T-cell (primary cell): ENCODE measurements at regions of chr15 and their contacts with region 1.

Region 1: GRCh38 chr15:80567721-80568157 is 127.4 kb upstream of the ABHD17C start:
- DNase-seq: peak in 7 of 35 experiments; percentile 1 to 46 (median 5)
- ATAC-seq: no peak
- H3K4me3 ChIP-seq: no peak overlapping the region
- H3K4me3 Mint-ChIP-seq: no peak overlapping the region
- H3K27ac ChIP-seq: no peak overlapping the region
- H3K27ac Mint-ChIP-seq: no peak overlapping the region
- H3K4me1 ChIP-seq: no peaks in the 10 kb centered on the region
- H3K4me1 Mint-ChIP-seq: no peaks in the 10 kb centered on the region
- H3K27me3 ChIP-seq: peaks cover 0 to 30% of the 10 kb centered on the region in 2 experiments
- H3K27me3 Mint-ChIP-seq: peaks cover 24 to 26% of the 10 kb centered on the region in 2 donors

Region 2: DNA sequence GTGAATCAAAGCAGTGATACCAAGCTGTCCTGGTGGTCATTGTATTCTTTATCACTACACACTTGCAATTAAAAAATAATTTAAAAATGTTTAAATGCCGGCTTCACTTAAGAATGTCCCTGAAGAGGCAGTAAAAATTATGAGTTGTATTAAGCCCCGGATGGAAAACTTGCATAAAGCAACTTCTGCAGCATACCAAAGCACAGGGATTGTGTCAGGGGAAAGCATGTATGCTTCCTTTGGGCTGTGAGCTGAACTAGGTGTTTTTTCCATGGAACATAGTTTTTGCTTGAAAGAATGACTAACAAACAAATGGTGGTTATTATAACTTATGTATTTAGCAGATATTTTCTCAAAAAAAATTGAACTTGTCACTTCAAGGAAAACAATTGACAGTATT is 20.5 kb before region 1 on chr15:
- CTCF ChIA-PET with region 1: no interaction called
- POLR2A ChIA-PET with region 1: no interaction called
- DNase-seq: no peak
- ATAC-seq: no peak
- H3K4me3 ChIP-seq: no peak overlapping the region
- H3K4me3 Mint-ChIP-seq: no peak overlapping the region
- H3K27ac ChIP-seq: no peak overlapping the region
- H3K27ac Mint-ChIP-seq: no peak overlapping the region
- H3K4me1 ChIP-seq: no peaks in the 10 kb centered on the region
- H3K4me1 Mint-ChIP-seq: no peaks in the 10 kb centered on the region
- H3K27me3 ChIP-seq: peaks cover 0 to 2% of the 10 kb centered on the region in 2 experiments
- H3K27me3 Mint-ChIP-seq: peaks cover 12 to 29% of the 10 kb centered on the region in 2 donors

Region 3: DNA sequence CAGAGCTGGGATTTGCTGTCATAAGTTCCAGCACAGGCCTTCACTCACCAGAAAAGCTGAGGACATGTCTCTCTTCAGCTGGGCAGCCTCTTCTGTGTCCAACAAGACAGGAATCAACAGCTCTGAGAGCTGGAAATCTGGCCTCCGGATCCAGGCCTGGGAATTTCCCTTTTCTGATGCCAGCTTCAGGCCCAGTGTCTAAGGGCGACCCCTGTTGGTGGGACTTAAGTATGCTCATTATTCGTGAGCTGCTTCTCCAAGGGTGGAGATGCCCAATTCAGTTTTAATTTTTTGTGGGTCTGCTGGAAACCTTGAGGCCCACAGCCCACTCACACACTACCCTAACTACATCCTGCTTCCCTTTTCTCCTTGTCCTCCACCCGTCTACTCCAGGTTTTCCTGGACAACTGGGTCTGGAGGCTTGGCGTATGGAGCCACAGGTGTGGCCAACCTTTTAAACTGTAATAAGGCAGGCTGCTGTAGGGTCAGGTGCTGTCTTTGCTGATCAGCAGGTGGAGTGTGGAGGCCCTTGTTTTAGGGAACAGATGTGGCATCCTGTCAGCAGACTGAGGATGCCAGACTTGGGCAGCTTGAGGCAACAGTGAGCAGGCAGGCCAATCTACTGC is 208.8 kb after region 1 on chr15:
- CTCF ChIA-PET with region 1: interaction called, 3 to 33 read pairs
- POLR2A ChIA-PET with region 1: no interaction called
- DNase-seq: peak; percentile 7 to 79 (median 45)
- ATAC-seq: peak in 1 of 4 experiments; percentile 33
- H3K4me3 ChIP-seq: no peak overlapping the region
- H3K4me3 Mint-ChIP-seq: no peak overlapping the region
- H3K27ac ChIP-seq: no peak overlapping the region
- H3K27ac Mint-ChIP-seq: no peak overlapping the region
- H3K4me1 ChIP-seq: peaks cover 0 to 14% of the 10 kb centered on the region in 2 experiments
- H3K4me1 Mint-ChIP-seq: peaks cover 7 to 15% (median 10%) of the 10 kb centered on the region in 3 donors
- H3K27me3 ChIP-seq: peaks cover 3 to 43% of the 10 kb centered on the region in 2 experiments
- H3K27me3 Mint-ChIP-seq: peaks cover 36 to 39% of the 10 kb centered on the region in 2 donors